ENCODE measurements at regions of chr19 and their contacts with region 1.

Region 1: GRCh38 chr19:48713864-48714758 is 5.4 kb downstream of the MAMSTR start:
- DNase-seq: peak; percentile 100
- H3K4me3 Mint-ChIP-seq: peak overlapping the region; percentile 88
- H3K27ac Mint-ChIP-seq: peak overlapping the region; percentile 87
- H3K4me1 Mint-ChIP-seq: peaks cover 12% of the 10 kb centered on the region
- H3K27me3 Mint-ChIP-seq: no peaks in the 10 kb centered on the region

Region 2: GRCh38 chr19:48333467-48334384 is 380.4 kb before region 1 on chr19:
- intact Hi-C with region 1: loop called (anchors 10 kb)
- DNase-seq: peak; percentile 98
- H3K4me3 Mint-ChIP-seq: peak overlapping the region; percentile 91
- H3K27ac Mint-ChIP-seq: peak overlapping the region; percentile 90
- H3K4me1 Mint-ChIP-seq: peaks cover 52% of the 10 kb centered on the region
- H3K27me3 Mint-ChIP-seq: no peaks in the 10 kb centered on the region

Region 3: DNA sequence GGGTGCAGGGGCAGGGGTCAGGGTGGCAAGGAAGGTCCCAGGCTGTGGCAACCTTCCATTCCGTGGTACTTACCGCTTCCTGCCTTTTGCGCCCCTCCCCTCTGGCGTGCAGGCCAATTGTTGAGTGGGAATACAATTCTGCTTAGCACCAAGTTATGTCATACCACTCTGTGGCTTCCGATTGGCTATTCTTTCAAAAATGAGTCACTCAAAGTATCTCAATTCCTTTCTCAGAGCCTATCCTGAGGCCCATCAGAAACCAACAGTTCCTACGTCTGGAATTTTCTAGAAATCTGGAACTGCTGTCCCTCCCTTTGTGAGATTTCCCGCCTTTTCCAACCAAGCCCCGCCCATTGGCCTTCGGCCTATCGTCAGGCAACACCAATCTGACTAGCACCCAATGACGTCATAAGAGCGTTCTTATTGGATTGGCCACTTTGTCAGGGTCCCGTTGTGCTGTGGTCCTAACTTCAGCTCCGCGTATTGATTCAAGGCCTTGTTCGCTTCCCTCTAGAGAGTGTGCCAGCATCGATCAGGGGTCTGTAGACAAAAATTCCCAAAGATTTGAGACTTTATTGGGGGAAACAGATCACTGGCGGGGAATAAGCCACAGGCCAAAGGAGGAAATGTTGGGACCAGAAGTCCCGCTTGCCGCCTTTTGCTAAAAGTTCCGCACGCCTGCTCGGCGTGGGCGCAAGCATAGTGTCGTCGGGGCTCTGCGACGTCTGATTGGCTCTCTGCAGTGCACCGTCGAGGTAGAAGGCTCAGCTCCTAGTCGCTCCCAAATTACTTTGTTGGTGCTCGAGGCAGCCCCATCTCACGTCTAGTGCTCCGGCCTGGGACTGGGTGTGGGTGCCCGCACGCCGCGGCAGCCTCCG is 53.0 kb before region 1 on chr19:
- intact Hi-C with region 1: loop called (anchors 1 kb)
- DNase-seq: peak; percentile 95
- H3K4me3 Mint-ChIP-seq: peak overlapping the region; percentile 57
- H3K27ac Mint-ChIP-seq: peak overlapping the region; percentile 87
- H3K4me1 Mint-ChIP-seq: peaks cover 9% of the 10 kb centered on the region
- H3K27me3 Mint-ChIP-seq: peaks cover 8% of the 10 kb centered on the region

Region 4: DNA sequence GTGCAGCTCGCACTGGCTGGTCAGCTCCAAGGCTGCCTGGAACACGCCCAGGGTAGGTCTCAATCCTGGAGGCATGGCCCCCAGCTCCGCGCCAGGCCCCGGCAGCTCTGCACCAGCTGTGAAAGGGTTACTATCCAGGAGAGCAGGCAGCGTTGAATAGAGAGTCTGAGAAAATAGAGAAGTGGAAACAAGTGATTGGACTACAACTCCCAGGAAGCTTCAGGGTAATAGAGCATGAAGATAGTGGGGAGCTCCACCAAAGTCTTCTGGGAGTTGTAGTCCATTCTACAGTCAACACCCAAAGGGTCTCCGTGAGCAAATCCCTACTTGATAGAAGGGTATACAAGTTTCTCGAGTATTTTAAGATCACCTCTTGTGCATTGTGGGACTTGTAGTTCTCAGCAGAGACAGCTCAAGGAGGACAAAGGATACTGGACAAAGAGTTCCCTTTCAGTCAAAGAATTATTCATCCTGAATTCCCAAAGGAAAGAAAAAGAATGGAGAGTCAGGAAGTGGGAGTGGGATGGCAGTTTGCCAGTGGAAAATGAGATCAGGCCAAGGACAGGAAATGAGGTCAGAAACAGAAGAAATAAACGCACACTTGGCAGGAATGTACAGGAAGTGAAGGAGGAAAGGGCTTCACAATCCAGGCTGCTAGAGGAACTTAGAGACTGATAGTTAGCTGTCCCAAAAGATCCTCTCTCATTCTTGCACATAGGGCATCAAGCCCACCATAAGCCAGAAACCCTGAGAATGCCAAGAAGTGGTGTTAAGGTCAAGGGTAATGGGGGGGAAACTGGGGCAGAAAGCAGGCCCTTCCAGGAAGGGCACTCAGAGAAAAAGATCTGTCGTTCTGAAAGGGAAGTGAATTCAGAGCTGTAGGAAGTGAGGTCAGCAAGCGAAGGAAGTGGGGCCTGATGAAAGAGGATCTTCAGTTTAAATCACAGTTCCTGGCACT is 11.0 kb after region 1 on chr19:
- intact Hi-C with region 1: no loop called
- DNase-seq: peak; percentile 81
- H3K4me3 Mint-ChIP-seq: peak overlapping the region; percentile 31
- H3K27ac Mint-ChIP-seq: peak overlapping the region; percentile 80
- H3K4me1 Mint-ChIP-seq: peaks cover 18% of the 10 kb centered on the region
- H3K27me3 Mint-ChIP-seq: no peaks in the 10 kb centered on the region

Region 5: GRCh38 chr19:48738557-48739399 is 24.7 kb after region 1 on chr19:
- intact Hi-C with region 1: loop called (anchors 1 kb)
- DNase-seq: peak; percentile 96
- H3K4me3 Mint-ChIP-seq: peak overlapping the region; percentile 79
- H3K27ac Mint-ChIP-seq: peak overlapping the region; percentile 80
- H3K4me1 Mint-ChIP-seq: peaks cover 11% of the 10 kb centered on the region
- H3K27me3 Mint-ChIP-seq: peaks cover 5% of the 10 kb centered on the region